ENCODE measurements at regions of chr19 and their contacts with region 1.

Region 1: GRCh38 chr19:44723952-44724319 is 24.6 kb upstream of the BCL3 start:
- DNase-seq: no peak
- H3K4me3 ChIP-seq: no peak overlapping the region
- CTCF ChIP-seq: peak; percentile 97

Region 2: GRCh38 chr19:44447916-44448674 is 275.8 kb before region 1 on chr19 and contains the start of gene ZNF229:
- CTCF ChIA-PET with region 1: no interaction called
- POLR2A ChIA-PET with region 1: no interaction called
- DNase-seq: peak; percentile 69
- H3K4me3 ChIP-seq: peak within 1 kb of the TSS; percentile 92
- CTCF ChIP-seq: no peak

Region 3: DNA sequence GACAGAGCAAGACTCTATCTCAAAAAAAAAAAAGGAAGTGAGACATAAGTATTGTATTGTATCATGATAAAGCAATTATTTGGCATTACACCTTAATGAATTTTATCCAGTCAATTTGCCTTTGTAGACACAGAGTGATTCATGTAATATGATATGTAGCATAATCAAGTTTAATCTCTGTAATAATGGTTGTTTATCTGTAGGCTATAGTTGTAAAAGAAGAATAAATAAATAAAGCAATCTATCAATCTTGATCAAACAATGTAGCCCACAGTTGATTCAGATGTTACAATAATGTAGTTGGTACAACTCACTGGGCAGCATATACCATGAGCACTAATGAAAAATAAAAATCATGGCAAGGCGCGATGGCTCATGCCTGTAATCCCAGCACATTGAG is 166.0 kb before region 1 on chr19:
- CTCF ChIA-PET with region 1: no interaction called
- POLR2A ChIA-PET with region 1: no interaction called
- DNase-seq: no peak
- H3K4me3 ChIP-seq: no peak overlapping the region
- CTCF ChIP-seq: no peak

Region 4: GRCh38 chr19:44643605-44644401 is 80.1 kb before region 1 on chr19 and contains the start of gene PVR:
- CTCF ChIA-PET with region 1: no interaction called
- POLR2A ChIA-PET with region 1: no interaction called
- DNase-seq: no peak
- H3K4me3 ChIP-seq: peak within 1 kb of the TSS; percentile 90
- CTCF ChIP-seq: no peak

Region 5: GRCh38 chr19:44653977-44654774 is 69.8 kb before region 1 on chr19:
- CTCF ChIA-PET with region 1: interaction called, 13 read pairs
- POLR2A ChIA-PET with region 1: no interaction called
- DNase-seq: no peak
- H3K4me3 ChIP-seq: no peak overlapping the region
- CTCF ChIP-seq: peak; percentile 62

Region 6: DNA sequence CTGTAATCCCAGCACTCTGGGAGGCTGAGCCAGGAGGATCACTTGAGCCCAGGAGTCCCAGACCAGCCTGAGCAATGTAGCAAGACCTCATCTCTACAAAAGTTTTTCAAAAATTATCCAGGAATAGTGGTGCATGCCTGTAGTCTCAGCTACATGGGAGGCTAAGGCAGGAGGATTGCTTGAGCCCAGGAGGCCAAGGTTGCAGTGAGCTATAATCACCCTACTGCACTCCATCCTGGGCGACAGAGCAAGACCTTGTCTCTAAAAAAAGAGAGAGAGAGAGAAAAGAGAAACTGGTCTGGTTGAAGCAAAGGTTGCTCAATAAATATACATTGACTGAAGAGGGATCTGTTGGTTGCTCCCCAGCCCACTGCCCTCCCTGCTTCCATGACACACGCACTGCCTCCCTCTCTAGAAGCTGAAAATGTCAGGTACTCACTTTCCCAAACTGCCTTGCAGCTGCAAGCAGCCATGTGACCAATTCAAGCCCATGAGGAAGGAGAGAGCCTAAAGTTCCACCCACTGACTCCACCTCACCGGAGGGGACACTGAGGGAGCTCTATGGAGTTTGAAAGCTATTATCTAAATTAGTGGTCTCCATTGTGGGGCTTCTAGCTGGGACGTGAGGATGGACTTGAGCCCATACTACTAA is 10.9 kb before region 1 on chr19:
- CTCF ChIA-PET with region 1: interaction called, 38 read pairs
- POLR2A ChIA-PET with region 1: interaction called, 5 read pairs
- DNase-seq: no peak
- H3K4me3 ChIP-seq: no peak overlapping the region
- CTCF ChIP-seq: no peak

Region 7: GRCh38 chr19:44770550-44771257 is 46.8 kb after region 1 on chr19:
- CTCF ChIA-PET with region 1: interaction called, 694 read pairs
- POLR2A ChIA-PET with region 1: interaction called, 4 read pairs
- DNase-seq: no peak
- H3K4me3 ChIP-seq: no peak overlapping the region
- CTCF ChIP-seq: peak; percentile 67

Region 8: DNA sequence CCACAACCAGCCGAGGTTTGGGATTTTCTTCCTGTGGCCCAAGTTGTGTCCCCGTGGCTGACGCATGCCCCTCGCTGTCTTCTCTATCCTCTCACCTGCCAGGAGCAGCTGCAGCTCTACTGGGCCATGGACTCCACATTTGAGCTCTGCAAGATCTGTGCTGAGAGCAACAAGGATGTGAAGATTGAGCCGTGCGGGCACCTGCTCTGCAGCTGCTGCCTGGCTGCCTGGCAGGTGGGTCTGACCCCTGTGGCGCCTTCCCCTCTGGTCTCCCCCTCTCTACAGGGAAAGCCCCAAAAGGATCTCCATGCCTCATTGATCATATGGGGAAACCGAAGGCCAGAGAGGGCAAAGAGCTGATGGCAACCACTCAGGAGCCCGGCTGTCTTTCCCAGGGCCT is 68.3 kb after region 1 on chr19:
- CTCF ChIA-PET with region 1: interaction called, 17 read pairs
- POLR2A ChIA-PET with region 1: no interaction called
- DNase-seq: no peak
- H3K4me3 ChIP-seq: no peak overlapping the region
- CTCF ChIP-seq: no peak

Region 9: DNA sequence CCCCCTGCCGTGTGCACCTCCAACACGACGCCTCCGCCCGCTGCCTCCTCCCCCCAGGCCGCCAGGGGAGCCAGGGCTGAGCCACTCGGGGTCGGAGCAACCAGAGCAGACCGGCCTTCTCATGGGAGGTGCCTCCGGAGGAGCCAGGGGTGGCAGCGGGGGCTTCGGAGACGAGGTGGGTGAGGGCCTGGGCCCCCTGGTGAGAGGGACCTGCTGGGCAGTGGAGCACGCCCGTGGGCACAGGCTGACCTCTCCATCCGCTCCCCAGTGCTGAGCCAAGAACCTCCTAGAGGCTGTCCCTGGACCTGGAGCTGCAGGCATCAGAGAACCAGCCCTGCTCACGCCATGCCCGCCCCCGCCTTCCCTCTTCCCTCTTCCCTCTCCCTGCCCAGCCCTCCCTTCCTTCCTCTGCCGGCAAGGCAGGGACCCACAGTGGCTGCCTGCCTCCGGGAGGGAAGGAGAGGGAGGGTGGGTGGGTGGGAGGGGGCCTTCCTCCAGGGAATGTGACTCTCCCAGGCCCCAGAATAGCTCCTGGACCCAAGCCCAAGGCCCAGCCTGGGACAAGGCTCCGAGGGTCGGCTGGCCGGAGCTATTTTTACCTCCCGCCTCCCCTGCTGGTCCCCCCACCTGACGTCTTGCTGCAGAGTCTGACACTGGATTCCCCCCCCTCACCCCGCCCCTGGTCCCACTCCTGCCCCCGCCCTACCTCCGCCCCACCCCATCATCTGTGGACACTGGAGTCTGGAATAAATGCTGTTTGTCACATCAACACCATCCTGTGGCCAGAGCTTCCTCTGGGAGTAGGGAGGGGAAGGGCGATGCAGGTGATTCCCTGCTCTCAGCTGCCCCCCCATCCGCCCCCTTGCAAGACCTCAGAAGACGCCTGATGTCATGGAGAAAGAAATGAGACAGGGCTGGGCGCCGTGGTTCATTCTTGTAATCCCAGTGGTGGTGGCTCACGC is 97.0 kb after region 1 on chr19:
- CTCF ChIA-PET with region 1: interaction called, 11 read pairs
- POLR2A ChIA-PET with region 1: no interaction called
- DNase-seq: no peak
- H3K4me3 ChIP-seq: no peak overlapping the region
- CTCF ChIP-seq: no peak

Region 10: DNA sequence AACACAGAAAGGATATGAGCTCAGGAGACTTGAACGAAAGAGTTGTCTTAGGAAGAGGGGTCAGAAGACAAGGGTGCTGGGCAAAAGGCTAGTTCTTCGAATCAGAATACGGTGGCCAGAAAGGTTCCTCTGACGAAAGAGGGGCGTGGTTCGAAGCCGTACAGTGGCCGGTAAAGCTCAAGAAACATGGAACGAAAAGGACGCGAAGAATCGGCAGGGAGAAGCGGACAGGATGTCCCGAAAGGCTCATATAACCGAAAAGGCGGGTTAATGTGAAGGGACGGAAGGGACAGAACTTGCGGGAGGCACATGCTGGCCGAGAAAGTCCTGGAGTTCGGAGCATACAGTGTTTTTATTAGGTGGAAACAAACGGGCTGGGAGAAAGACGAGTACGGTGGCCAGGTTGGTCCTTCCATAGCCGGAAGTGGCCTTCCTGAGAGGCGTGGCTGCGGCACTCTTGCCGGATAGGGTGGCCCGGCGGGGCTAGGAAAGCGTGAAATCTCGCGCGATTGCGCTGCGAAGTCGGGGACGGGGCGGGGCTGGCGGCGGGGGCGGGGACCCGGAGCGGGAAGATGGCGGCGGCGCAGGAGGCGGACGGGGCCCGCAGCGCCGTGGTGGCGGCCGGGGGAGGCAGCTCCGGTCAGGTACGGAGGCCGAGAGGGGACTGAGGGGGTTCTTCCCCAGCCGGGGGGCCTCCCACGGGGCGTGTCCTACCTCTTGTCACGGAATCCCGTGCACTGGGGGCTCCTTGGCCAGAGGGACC is 231.1 kb after region 1 on chr19 and contains the start of gene CLPTM1:
- CTCF ChIA-PET with region 1: interaction called, 15 read pairs
- POLR2A ChIA-PET with region 1: no interaction called
- DNase-seq: peak; percentile 70
- H3K4me3 ChIP-seq: peak within 1 kb of the TSS; percentile 98
- CTCF ChIP-seq: no peak